ENCODE measurements at regions of chr6 and their contacts with region 1.

Region 1: GRCh38 chr6:124869416-124869815 is 92.8 kb upstream of the RNF217 start:
- DNase-seq: no peak
- ATAC-seq: no peak
- H3K4me3 Mint-ChIP-seq: no peak overlapping the region
- H3K27ac Mint-ChIP-seq: no peak overlapping the region
- H3K4me1 Mint-ChIP-seq: no peaks in the 10 kb centered on the region
- H3K27me3 Mint-ChIP-seq: no peaks in the 10 kb centered on the region
- CTCF ChIP-seq: no peak

Region 2: GRCh38 chr6:125114248-125114858 is 244.9 kb after region 1 on chr6:
- CTCF ChIA-PET with region 1: interaction called, 5 read pairs
- POLR2A ChIA-PET with region 1: no interaction called
- intact Hi-C with region 1: loop called (anchors 5 kb)
- DNase-seq: peak; percentile 71
- ATAC-seq: no peak
- H3K4me3 Mint-ChIP-seq: no peak overlapping the region
- H3K27ac Mint-ChIP-seq: no peak overlapping the region
- H3K4me1 Mint-ChIP-seq: no peaks in the 10 kb centered on the region
- H3K27me3 Mint-ChIP-seq: peaks cover 1% of the 10 kb centered on the region
- CTCF ChIP-seq: peak; percentile 65